ENCODE measurements at regions of chr12 and their contacts with region 1.

Region 1: GRCh38 chr12:123232807-123233543 is at the starts of genes MPHOSPH9 and MTRFR:
- DNase-seq: peak; percentile 99
- H3K4me3 ChIP-seq: peak within 1 kb of the TSS; percentile 75 to 79
- H3K27ac ChIP-seq: peak within 1 kb of the TSS; percentile 81 to 93
- H3K4me1 ChIP-seq: peaks cover 21% of the 10 kb centered on the region
- H3K27me3 ChIP-seq: no peaks in the 10 kb centered on the region
- CTCF ChIP-seq: peak in 1 of 3 experiments; percentile 18
- POLR2A ChIP-seq: peak; percentile 81
- total RNA-seq, gene MPHOSPH9: 60.3 to 81.1 TPM
- total RNA-seq, gene MTRFR: 21.1 to 23.6 TPM

Region 2: GRCh38 chr12:122980183-122981046 is 252.6 kb before region 1 on chr12 and contains the start of gene ARL6IP4:
- intact Hi-C with region 1: loop called (anchors 5 kb)
- DNase-seq: peak; percentile 63
- H3K4me3 ChIP-seq: peak within 1 kb of the TSS; percentile 94 to 97
- H3K27ac ChIP-seq: peak within 1 kb of the TSS; percentile 89 to 92
- H3K4me1 ChIP-seq: peaks cover 62% of the 10 kb centered on the region
- H3K27me3 ChIP-seq: no peaks in the 10 kb centered on the region
- CTCF ChIP-seq: no peak
- POLR2A ChIP-seq: peak; percentile 10
- total RNA-seq, gene ARL6IP4: 169 to 190 TPM

Region 3: GRCh38 chr12:122992386-122992785 is 240.6 kb before region 1 on chr12:
- intact Hi-C with region 1: no loop called
- DNase-seq: no peak
- H3K4me3 ChIP-seq: no peak overlapping the region
- H3K27ac ChIP-seq: no peak overlapping the region
- H3K4me1 ChIP-seq: peaks cover 10% of the 10 kb centered on the region
- H3K27me3 ChIP-seq: no peaks in the 10 kb centered on the region
- CTCF ChIP-seq: no peak
- POLR2A ChIP-seq: no peak

Region 4: GRCh38 chr12:123043536-123044001 is 189.4 kb before region 1 on chr12:
- intact Hi-C with region 1: loop called (anchors 10 kb)
- DNase-seq: peak; percentile 83
- H3K4me3 ChIP-seq: no peak overlapping the region
- H3K27ac ChIP-seq: peak overlapping the region in 1 of 2 donors; percentile 31
- H3K4me1 ChIP-seq: peaks cover 28% of the 10 kb centered on the region
- H3K27me3 ChIP-seq: no peaks in the 10 kb centered on the region
- CTCF ChIP-seq: peak; percentile 43 to 48 (median 47)
- POLR2A ChIP-seq: no peak

Region 5: GRCh38 chr12:123126186-123127006 is 106.6 kb before region 1 on chr12:
- intact Hi-C with region 1: no loop called
- DNase-seq: no peak
- H3K4me3 ChIP-seq: no peak overlapping the region
- H3K27ac ChIP-seq: no peak overlapping the region
- H3K4me1 ChIP-seq: peaks cover 7% of the 10 kb centered on the region
- H3K27me3 ChIP-seq: no peaks in the 10 kb centered on the region
- CTCF ChIP-seq: no peak
- POLR2A ChIP-seq: no peak

Region 6: GRCh38 chr12:123457980-123458783 is 225.2 kb after region 1 on chr12 and contains the start of gene SNRNP35:
- intact Hi-C with region 1: no loop called
- DNase-seq: peak; percentile 87
- H3K4me3 ChIP-seq: peak within 1 kb of the TSS; percentile 77 to 94
- H3K27ac ChIP-seq: peak within 1 kb of the TSS; percentile 98 to 100
- H3K4me1 ChIP-seq: peaks cover 14% of the 10 kb centered on the region
- H3K27me3 ChIP-seq: no peaks in the 10 kb centered on the region
- CTCF ChIP-seq: no peak
- POLR2A ChIP-seq: no peak
- total RNA-seq, gene SNRNP35: 16.5 to 31.7 TPM

Measured in testis (tissue), 5 donors.